Head of caudate nucleus (tissue), 42 donors: ENCODE measurements at regions of chr10 and their contacts with region 1.

Region 1: GRCh38 chr10:97334370-97335175 is at the start of gene FRAT2:
- DNase-seq: peak; percentile 74 to 95 (median 91)

Region 2: DNA sequence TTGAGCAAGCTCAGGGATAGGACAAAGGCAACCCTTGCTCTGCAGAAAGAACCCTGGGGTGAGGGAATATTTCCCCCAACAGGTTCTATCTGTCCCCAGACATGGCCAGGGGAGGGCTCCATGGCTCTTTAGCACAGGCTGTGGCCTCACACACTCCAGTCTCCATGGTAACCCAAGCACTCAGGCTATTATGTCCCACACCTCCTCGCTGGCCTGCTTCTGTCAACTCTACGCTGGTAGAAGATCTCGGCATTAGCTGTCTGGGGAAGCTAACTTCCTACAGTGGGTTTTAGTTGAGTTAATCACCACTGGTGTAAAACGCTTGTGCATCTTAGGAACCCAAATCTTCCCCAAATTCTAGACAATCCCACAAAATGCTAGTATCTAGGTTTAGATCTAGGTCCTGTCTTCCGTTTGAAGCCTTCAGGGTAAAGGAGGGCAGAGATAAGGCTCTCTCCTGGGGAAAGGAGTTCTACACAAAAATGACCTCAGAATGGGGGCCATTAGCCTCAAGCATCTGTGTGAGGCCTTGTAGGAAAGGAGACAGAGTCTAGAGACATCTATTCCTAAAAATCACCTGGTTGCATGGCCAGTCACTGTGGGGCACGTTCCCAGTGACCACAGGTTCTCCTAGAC is 112.1 kb before region 1 on chr10:
- intact Hi-C with region 1: no loop called
- DNase-seq: peak in 6 of 42 donors; percentile 12 to 43 (median 28)

Region 3: GRCh38 chr10:97255512-97256293 is 78.9 kb before region 1 on chr10:
- intact Hi-C with region 1: no loop called
- DNase-seq: no peak

Region 4: DNA sequence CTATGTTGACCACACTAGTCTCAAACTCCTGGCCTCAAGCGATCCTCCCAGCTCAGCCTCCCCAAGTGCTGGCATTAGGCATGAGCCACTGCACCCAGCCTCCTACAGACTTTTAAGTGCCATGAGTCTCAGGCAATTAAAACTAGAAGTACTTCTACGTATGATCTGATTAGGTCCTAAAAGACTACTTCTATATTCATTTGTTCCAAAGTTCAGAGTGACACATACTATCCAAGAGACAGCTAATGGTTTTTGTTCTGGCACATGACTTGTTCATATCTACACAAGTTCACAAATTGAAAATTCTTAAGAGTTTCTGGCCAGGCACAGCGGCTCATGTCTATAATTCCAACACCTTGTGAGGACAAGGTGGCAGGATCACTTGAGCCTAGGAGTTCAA is 53.8 kb before region 1 on chr10:
- intact Hi-C with region 1: loop called (anchors 5 kb)
- DNase-seq: no peak

Region 5: GRCh38 chr10:97318772-97319651 is 15.6 kb before region 1 on chr10 and contains the start of gene FRAT1:
- intact Hi-C with region 1: loop called (anchors 1 kb)
- DNase-seq: peak; percentile 78 to 96 (median 91)